ENCODE measurements at regions of chr22 and their contacts with region 1.

Region 1: GRCh38 chr22:43385770-43386641 is 25.8 kb upstream of the MPPED1 start:
- DNase-seq: peak; percentile 84
- H3K4me3 ChIP-seq: no peak overlapping the region
- H3K27ac ChIP-seq: no peak overlapping the region
- H3K4me1 ChIP-seq: peaks cover 0 to 7% (median 3%) of the 10 kb centered on the region in 4 donors
- H3K27me3 ChIP-seq: peaks cover 0 to 28% (median 15%) of the 10 kb centered on the region in 3 donors
- CTCF ChIP-seq: peak; percentile 43 to 87 (median 76)
- EP300 ChIP-seq: no peak
- POLR2A ChIP-seq: no peak

Region 2: GRCh38 chr22:43213051-43213450 is 173.0 kb before region 1 on chr22:
- intact Hi-C with region 1: no loop called
- DNase-seq: no peak
- H3K4me3 ChIP-seq: no peak overlapping the region
- H3K27ac ChIP-seq: no peak overlapping the region
- H3K4me1 ChIP-seq: no peaks in the 10 kb centered on the region
- H3K27me3 ChIP-seq: peaks cover 0 to 5% (median 0%) of the 10 kb centered on the region in 3 donors
- CTCF ChIP-seq: no peak
- EP300 ChIP-seq: no peak
- POLR2A ChIP-seq: no peak

Region 3: DNA sequence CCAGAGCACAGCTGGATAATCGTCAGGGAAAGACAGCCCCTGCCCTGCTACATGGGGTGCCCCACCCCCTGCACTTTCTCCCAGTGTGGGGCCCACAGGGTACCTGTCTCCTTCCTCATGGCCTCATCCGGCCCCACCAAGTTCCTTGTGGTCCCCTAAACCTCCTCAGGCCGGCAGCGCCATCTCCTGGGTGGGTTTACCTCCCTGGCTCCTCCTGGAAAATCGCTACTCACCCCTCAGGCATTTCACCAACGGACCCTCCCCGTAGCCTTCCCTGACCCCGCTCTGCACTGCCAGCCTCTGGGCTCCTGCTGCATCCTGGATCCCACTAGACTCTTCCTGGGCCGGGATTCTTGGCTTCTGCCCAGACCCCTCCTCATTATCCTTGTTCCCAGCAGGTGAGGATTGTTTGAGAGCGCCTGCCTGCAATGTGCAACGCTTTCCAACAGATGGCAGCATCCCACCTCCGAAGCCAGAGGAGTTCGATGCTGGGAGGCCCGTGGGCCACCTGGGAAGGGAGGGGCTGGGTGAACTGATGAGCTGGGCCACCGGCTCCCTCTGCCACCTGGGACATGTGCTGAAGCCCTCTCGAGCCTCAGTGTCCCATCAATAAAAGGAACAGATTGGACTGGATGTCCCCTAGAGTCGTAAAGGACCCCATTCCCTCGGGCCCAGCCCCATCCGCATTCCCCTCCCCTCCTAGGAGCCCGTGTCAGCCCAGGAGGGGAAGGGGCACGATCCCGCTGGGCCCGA is 154.9 kb before region 1 on chr22:
- intact Hi-C with region 1: loop called (anchors 1 kb)
- DNase-seq: no peak
- H3K4me3 ChIP-seq: no peak overlapping the region
- H3K27ac ChIP-seq: no peak overlapping the region
- H3K4me1 ChIP-seq: no peaks in the 10 kb centered on the region
- H3K27me3 ChIP-seq: peaks cover 0 to 28% (median 21%) of the 10 kb centered on the region in 3 donors
- CTCF ChIP-seq: peak; percentile 17 to 87 (median 75)
- EP300 ChIP-seq: no peak
- POLR2A ChIP-seq: no peak

Region 4: GRCh38 chr22:43273902-43274484 is 112.0 kb before region 1 on chr22:
- intact Hi-C with region 1: loop called (anchors 2 kb)
- DNase-seq: no peak
- H3K4me3 ChIP-seq: no peak overlapping the region
- H3K27ac ChIP-seq: no peak overlapping the region
- H3K4me1 ChIP-seq: peaks cover 0 to 10% (median 4%) of the 10 kb centered on the region in 4 donors
- H3K27me3 ChIP-seq: peaks cover 0 to 9% (median 8%) of the 10 kb centered on the region in 3 donors
- CTCF ChIP-seq: peak; percentile 38 to 67 (median 63)
- EP300 ChIP-seq: no peak
- POLR2A ChIP-seq: no peak

Region 5: DNA sequence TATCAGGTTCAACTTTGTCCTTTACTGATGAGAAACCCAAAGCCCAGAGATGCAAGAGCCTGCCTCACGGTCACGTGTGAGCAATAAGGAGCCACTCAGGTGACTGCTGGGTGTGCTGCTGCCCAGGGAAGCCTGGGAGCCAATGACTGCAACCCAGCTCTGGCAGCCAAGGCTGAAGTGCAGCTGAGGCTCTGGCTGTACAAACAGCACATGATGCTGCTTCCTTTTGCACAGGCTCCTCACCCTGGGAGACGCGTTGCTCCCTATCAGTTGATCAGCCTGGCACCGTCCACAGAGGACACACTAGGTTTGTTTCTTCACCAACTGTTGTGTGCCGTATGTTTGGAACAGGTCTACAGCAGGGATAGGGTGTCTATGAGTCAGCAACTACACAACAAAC is 257.4 kb after region 1 on chr22:
- intact Hi-C with region 1: no loop called
- DNase-seq: no peak
- H3K4me3 ChIP-seq: no peak overlapping the region
- H3K27ac ChIP-seq: no peak overlapping the region
- H3K4me1 ChIP-seq: no peaks in the 10 kb centered on the region
- H3K27me3 ChIP-seq: no peaks in the 10 kb centered on the region
- CTCF ChIP-seq: no peak
- EP300 ChIP-seq: no peak
- POLR2A ChIP-seq: no peak

Region 6: DNA sequence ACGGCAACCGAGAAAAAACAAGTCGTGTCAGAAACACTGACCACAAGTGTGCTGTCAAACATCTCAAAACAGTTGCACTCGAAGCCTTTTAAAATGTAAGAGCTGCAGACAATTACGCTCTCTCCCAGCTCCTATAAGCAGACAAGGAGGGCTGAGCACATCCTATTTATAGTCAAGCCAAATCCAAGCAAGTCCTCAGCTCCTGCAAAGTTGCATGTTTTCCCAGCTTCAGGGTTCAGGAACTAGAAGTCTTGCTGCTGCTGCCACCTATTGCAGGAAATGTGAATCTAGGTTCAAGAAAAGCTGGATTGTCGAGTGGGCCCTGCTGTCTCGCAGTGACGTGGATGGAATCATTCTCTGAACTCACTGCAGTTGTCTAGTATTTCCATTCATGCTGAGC is 410.6 kb after region 1 on chr22:
- intact Hi-C with region 1: loop called (anchors 1 kb)
- DNase-seq: no peak
- H3K4me3 ChIP-seq: no peak overlapping the region
- H3K27ac ChIP-seq: peak overlapping the region in 1 of 4 donors; percentile 2
- H3K4me1 ChIP-seq: peaks cover 0 to 6% (median 3%) of the 10 kb centered on the region in 4 donors
- H3K27me3 ChIP-seq: no peaks in the 10 kb centered on the region
- CTCF ChIP-seq: peak in 3 of 4 experiments; percentile 12 to 36 (median 30)
- EP300 ChIP-seq: no peak
- POLR2A ChIP-seq: no peak

Region 7: GRCh38 chr22:43826142-43827002 is 440.4 kb after region 1 on chr22:
- intact Hi-C with region 1: loop called (anchors 1 kb)
- DNase-seq: no peak
- H3K4me3 ChIP-seq: peak overlapping the region in 2 of 4 donors; percentile 20 to 21
- H3K27ac ChIP-seq: peak overlapping the region; percentile 11 to 71 (median 42)
- H3K4me1 ChIP-seq: peaks cover 0 to 30% (median 22%) of the 10 kb centered on the region in 4 donors
- H3K27me3 ChIP-seq: peaks cover 0 to 9% (median 7%) of the 10 kb centered on the region in 3 donors
- CTCF ChIP-seq: peak in 1 of 4 experiments; percentile 39
- EP300 ChIP-seq: no peak
- POLR2A ChIP-seq: no peak

Region 8: DNA sequence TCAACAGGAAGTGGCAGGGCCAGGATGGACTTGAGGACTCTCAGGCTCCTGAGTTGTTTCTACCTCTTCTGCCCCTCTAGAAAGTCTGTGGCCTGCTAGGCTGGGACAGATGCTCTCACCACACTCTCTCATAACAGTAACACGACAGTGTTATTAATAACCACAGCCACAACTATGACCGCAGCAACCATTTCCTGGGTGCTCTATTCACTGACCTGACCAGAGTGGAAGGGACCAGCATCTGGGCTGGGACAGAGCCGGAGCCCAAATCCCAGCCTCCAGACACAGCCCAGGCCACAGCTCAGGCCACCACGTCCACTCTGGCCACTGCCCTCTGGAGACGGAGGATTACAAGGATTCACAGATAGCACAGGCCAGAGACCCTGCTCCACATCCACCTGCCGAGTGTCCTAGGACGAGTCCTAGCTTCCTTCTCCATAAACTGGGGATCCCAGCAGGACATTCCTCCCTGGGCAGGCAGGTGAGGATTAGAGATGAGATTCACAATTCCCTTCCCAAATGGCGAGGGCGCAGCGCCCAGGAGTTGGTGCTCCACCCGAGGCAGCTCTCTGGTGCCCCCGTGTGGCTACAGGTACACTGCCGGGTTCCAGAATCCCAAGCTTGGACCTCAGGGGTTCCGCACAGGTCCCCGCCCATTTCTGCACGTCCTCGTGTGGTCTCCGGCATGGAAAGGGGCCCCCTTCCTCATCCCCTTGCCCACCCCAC is 498.8 kb after region 1 on chr22:
- intact Hi-C with region 1: loop called (anchors 5 kb)
- DNase-seq: peak; percentile 61
- H3K4me3 ChIP-seq: no peak overlapping the region
- H3K27ac ChIP-seq: no peak overlapping the region
- H3K4me1 ChIP-seq: no peaks in the 10 kb centered on the region
- H3K27me3 ChIP-seq: peaks cover 3 to 41% (median 33%) of the 10 kb centered on the region in 3 donors
- CTCF ChIP-seq: peak; percentile 18 to 66 (median 32)
- EP300 ChIP-seq: no peak
- POLR2A ChIP-seq: no peak

Measured in sigmoid colon (tissue), 7 donors.